K562 (cell line): ENCODE measurements at regions of chr4 and their contacts with region 1.

Region 1: GRCh38 chr4:111283061-111283677 is 660.3 kb upstream of the PITX2 start:
- DNase-seq: peak; percentile 25 to 46 (median 40)
- ATAC-seq: no peak
- H3K4me3 ChIP-seq: no peak overlapping the region
- H3K27ac ChIP-seq: no peak overlapping the region
- H3K4me1 ChIP-seq: no peaks in the 10 kb centered on the region
- H3K27me3 ChIP-seq: no peaks in the 10 kb centered on the region
- CTCF ChIP-seq: peak; percentile 52 to 74 (median 63)
- EP300 ChIP-seq: no peak
- POLR2A ChIP-seq: no peak
- RAD21 ChIP-seq: peak; percentile 20 to 48; a peak in 2 of 4 replicates

Region 2: DNA sequence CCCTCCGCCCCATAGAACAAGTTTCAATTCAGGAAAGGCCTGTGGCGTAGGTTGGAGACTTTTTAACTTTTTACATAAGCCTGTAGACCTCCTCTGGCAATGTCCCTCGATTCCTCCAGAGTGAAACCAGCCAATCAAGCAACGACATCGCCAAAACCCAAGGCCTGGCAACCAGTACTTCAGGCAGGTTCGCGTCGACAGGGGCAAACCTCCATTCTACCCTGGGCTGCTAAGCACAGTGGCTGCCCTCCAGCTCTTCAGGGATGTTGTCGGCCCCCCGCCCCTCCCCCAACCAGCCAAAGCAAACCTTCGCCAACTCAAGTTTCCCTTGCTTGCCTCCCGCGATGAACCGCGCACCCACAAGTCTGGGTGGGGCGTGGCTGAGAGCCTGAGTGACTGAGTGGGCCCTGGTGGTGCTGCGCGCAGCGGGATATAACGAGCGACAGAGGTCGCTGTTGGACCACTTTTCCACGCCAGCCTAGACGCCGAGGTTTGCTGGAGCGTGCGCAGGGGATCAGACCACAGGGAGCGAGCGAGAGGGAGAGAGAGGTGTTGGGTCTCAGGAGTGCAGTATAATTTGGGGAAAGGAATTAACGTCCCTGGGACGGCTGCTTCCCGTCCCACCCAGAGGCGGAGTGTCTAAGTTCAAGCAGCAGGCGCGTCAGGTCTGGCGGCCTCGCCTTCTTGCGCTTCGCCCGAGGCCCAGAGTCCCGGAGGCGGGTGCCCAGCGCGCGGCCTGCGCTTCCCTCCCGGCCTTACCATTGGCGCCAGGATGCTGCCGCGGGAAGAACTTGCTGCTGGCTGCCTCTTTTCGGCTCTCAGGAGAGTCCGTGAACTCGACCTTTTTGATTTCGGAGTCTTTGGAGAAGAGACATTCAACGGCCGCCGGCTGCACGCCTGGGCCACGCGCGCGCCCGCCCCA is 651.3 kb before region 1 on chr4:
- CTCF ChIA-PET with region 1: no interaction called
- POLR2A ChIA-PET with region 1: no interaction called
- in situ Hi-C with region 1: no loop called
- intact Hi-C with region 1: loop called (anchors 5 kb)
- DNase-seq: peak; percentile 65 to 72 (median 71)
- ATAC-seq: peak; percentile 99
- H3K4me3 ChIP-seq: no peak overlapping the region
- H3K27ac ChIP-seq: no peak overlapping the region
- H3K4me1 ChIP-seq: peaks cover 0 to 20% of the 10 kb centered on the region in 2 experiments; a peak in 2 of 5 replicates
- H3K27me3 ChIP-seq: peaks cover 39 to 53% of the 10 kb centered on the region in 2 experiments; a peak in 4 of 5 replicates
- CTCF ChIP-seq: peak; percentile 68 to 84 (median 75)
- EP300 ChIP-seq: no peak
- POLR2A ChIP-seq: no peak
- RAD21 ChIP-seq: peak; percentile 34 to 60; a peak in 3 of 4 replicates

Region 3: DNA sequence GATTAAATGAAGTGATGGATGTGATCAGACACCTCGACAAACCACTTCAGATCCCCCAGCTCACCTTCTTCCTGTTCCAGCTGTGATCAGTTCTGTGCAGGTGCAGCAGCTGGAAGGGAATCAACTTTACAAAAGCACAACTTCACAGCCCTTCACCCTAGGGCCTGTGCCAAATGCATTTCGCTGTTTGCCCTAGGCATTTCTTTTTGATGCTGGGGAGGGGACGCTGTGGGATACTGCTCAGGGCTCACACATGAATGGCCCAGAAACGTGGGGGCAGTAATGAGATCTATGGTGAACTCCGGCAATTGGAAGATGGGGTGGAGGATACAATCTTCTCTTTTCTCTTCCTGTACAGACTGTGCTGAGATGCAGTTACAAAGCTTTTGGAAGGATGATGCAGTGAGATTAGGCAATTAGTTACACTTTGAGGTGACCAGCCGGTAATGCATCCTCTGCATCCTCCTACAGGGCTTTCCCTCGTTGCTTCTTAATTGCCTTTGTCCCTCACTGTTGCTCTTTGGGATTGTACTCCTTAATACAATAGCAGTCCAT is 445.2 kb before region 1 on chr4:
- CTCF ChIA-PET with region 1: no interaction called
- POLR2A ChIA-PET with region 1: no interaction called
- in situ Hi-C with region 1: no loop called
- intact Hi-C with region 1: loop called (anchors 10 kb)
- DNase-seq: no peak
- ATAC-seq: no peak
- H3K4me3 ChIP-seq: no peak overlapping the region
- H3K27ac ChIP-seq: no peak overlapping the region
- H3K4me1 ChIP-seq: no peaks in the 10 kb centered on the region
- H3K27me3 ChIP-seq: no peaks in the 10 kb centered on the region
- CTCF ChIP-seq: no peak
- EP300 ChIP-seq: no peak
- POLR2A ChIP-seq: no peak
- RAD21 ChIP-seq: no peak

Region 4: GRCh38 chr4:111268769-111269414 is 14.3 kb before region 1 on chr4:
- CTCF ChIA-PET with region 1: no interaction called
- POLR2A ChIA-PET with region 1: no interaction called
- in situ Hi-C with region 1: no loop called
- intact Hi-C with region 1: no loop called
- DNase-seq: no peak
- ATAC-seq: no peak
- H3K4me3 ChIP-seq: no peak overlapping the region
- H3K27ac ChIP-seq: no peak overlapping the region
- H3K4me1 ChIP-seq: no peaks in the 10 kb centered on the region
- H3K27me3 ChIP-seq: no peaks in the 10 kb centered on the region
- CTCF ChIP-seq: no peak
- EP300 ChIP-seq: no peak
- POLR2A ChIP-seq: no peak
- RAD21 ChIP-seq: no peak

Region 5: GRCh38 chr4:111330786-111331185 is 47.6 kb after region 1 on chr4:
- CTCF ChIA-PET with region 1: no interaction called
- POLR2A ChIA-PET with region 1: no interaction called
- in situ Hi-C with region 1: no loop called
- intact Hi-C with region 1: no loop called
- DNase-seq: no peak
- ATAC-seq: no peak
- H3K4me3 ChIP-seq: no peak overlapping the region
- H3K27ac ChIP-seq: no peak overlapping the region
- H3K4me1 ChIP-seq: no peaks in the 10 kb centered on the region
- H3K27me3 ChIP-seq: no peaks in the 10 kb centered on the region
- CTCF ChIP-seq: no peak
- EP300 ChIP-seq: no peak
- POLR2A ChIP-seq: no peak
- RAD21 ChIP-seq: no peak

Region 6: DNA sequence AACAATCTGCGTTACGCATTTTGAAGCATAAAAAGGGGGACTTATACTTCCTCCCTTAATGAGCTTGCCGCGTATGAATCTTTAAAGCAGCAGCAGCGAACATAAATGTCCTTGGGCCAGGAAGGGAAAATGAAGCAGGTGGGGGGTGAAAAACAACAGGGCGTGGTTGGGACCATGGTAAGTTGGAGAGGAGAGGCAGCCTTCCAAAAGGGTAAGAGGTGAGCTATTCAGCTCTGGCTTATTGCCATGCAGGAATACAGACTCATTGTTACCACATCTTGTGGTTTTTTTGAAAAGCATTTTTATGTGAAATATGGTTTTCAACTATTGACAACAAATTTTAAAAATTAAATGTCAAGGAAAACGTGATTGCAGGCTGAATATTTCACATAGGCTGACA is 151.4 kb after region 1 on chr4:
- CTCF ChIA-PET with region 1: no interaction called
- POLR2A ChIA-PET with region 1: no interaction called
- in situ Hi-C with region 1: no loop called
- intact Hi-C with region 1: no loop called
- DNase-seq: no peak
- ATAC-seq: no peak
- H3K4me3 ChIP-seq: no peak overlapping the region
- H3K27ac ChIP-seq: no peak overlapping the region
- H3K4me1 ChIP-seq: no peaks in the 10 kb centered on the region
- H3K27me3 ChIP-seq: no peaks in the 10 kb centered on the region
- CTCF ChIP-seq: no peak
- EP300 ChIP-seq: no peak
- POLR2A ChIP-seq: no peak
- RAD21 ChIP-seq: no peak